ENCODE measurements at regions of chr12 and their contacts with region 1.

Region 1: DNA sequence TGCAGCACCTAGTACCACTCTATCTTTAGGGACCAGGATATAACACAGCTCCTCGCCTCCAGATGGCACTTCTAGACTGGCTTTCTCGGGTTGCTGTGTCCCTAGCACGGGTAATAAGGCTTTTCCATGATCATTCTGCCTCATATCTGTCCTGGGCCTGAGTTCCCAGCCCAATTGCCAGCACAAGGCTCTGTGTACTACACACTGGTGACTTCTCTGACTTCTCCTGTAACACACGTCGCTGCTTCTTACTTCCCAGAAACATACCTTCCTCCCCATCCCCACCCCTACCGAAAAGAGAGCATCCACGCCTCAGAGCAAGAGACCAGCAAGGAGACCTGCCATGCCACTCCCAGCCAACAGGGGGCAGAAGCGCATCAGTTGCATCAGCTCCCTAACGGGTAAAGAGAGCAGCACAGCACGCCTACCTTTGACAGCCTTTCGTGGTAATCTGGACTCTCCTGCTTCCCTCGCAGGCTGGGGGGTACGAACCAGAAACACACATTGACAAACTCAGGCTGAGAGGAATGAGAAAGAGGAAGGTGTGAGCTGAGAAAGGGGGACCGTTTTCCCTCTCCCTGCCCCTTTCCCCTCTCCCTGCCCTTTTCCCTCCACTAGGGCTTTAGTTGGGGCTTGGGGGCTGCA is 21.2 kb upstream of the ZNF740 start:
- DNase-seq: peak; percentile 93
- H3K4me3 Mint-ChIP-seq: no peak overlapping the region
- H3K27ac Mint-ChIP-seq: peak overlapping the region; percentile 21
- H3K4me1 Mint-ChIP-seq: peaks cover 12% of the 10 kb centered on the region
- H3K27me3 Mint-ChIP-seq: no peaks in the 10 kb centered on the region

Region 2: GRCh38 chr12:53098982-53099651 is 60.2 kb before region 1 on chr12:
- CTCF ChIA-PET with region 1: interaction called, 12 read pairs
- POLR2A ChIA-PET with region 1: interaction called, 3 read pairs
- DNase-seq: peak; percentile 90
- H3K4me3 Mint-ChIP-seq: peak overlapping the region; percentile 71
- H3K27ac Mint-ChIP-seq: peak overlapping the region; percentile 69
- H3K4me1 Mint-ChIP-seq: peaks cover 52% of the 10 kb centered on the region
- H3K27me3 Mint-ChIP-seq: peaks cover 15% of the 10 kb centered on the region

Region 3: GRCh38 chr12:53115112-53115890 is 44.0 kb before region 1 on chr12:
- CTCF ChIA-PET with region 1: no interaction called
- POLR2A ChIA-PET with region 1: no interaction called
- DNase-seq: no peak
- H3K4me3 Mint-ChIP-seq: no peak overlapping the region
- H3K27ac Mint-ChIP-seq: no peak overlapping the region
- H3K4me1 Mint-ChIP-seq: no peaks in the 10 kb centered on the region
- H3K27me3 Mint-ChIP-seq: no peaks in the 10 kb centered on the region

Region 4: DNA sequence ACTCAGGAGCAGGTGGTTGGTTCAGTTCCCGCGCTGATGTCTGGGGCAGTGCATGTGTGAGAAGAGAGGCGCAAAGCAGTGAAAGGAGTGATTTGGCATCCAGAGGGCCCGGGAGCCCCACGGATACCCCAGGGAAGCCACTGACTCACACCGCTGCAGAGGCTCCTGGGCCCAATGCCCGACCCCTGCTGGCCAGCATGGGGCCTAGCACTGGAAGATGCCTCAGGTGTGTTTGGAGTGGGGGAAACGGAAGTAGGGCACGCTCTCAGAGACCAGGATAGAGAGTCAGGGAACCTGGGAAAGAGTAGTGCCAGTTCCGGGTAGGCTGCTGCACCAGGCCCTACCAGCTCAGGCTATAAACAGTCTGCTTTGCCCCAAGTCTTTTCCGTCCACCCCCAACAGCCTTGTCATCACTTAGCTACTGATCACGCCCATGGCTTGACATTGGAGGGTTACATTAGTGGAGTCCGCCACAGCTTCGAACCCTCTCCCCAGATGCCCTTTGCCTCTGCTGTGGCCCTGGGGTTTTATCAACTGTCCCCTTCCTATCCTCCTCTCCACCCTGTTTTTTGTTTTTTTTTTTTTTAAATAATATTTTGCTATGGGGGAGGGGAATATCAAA is 30.9 kb after region 1 on chr12:
- CTCF ChIA-PET with region 1: interaction called, 17 read pairs
- POLR2A ChIA-PET with region 1: interaction called, 27 read pairs
- DNase-seq: peak; percentile 43
- H3K4me3 Mint-ChIP-seq: no peak overlapping the region
- H3K27ac Mint-ChIP-seq: peak overlapping the region; percentile 50
- H3K4me1 Mint-ChIP-seq: peaks cover 21% of the 10 kb centered on the region
- H3K27me3 Mint-ChIP-seq: no peaks in the 10 kb centered on the region

Region 5: DNA sequence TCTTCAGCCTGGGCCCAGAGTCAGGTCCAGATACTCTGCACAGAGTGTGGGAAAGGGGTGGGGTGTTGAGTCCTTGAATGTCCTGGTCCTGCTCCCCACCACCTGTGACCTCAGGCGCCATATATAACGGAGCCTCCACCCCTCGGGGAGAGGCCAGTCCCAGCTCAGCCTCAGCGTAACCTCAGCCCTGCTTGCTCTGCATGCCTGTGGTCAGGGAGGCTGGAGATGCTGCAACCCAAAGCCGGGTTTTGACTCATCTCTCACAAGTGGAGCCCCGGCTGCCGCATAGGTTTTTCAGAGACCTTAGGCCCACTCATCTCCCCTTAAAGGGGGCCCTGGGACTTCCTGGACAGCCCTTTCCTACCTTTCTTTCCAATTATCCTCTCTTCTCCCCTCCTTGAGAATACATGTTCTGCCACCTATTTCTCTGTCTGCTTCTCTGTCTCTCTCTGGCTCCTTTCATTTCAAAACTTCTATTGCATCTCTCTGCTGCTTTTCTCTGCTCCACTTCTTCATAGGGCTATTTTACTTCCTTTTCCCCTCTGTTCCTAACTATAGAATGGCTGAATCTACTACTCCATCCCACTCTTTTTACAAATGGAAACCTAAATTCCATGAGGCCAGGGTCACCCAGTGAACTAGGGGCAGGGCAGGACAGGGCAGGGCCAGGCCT is 46.6 kb after region 1 on chr12:
- CTCF ChIA-PET with region 1: interaction called, 14 read pairs
- POLR2A ChIA-PET with region 1: interaction called, 6 read pairs
- DNase-seq: peak; percentile 90
- H3K4me3 Mint-ChIP-seq: peak overlapping the region; percentile 78
- H3K27ac Mint-ChIP-seq: peak overlapping the region; percentile 84
- H3K4me1 Mint-ChIP-seq: peaks cover 82% of the 10 kb centered on the region
- H3K27me3 Mint-ChIP-seq: no peaks in the 10 kb centered on the region

Region 6: DNA sequence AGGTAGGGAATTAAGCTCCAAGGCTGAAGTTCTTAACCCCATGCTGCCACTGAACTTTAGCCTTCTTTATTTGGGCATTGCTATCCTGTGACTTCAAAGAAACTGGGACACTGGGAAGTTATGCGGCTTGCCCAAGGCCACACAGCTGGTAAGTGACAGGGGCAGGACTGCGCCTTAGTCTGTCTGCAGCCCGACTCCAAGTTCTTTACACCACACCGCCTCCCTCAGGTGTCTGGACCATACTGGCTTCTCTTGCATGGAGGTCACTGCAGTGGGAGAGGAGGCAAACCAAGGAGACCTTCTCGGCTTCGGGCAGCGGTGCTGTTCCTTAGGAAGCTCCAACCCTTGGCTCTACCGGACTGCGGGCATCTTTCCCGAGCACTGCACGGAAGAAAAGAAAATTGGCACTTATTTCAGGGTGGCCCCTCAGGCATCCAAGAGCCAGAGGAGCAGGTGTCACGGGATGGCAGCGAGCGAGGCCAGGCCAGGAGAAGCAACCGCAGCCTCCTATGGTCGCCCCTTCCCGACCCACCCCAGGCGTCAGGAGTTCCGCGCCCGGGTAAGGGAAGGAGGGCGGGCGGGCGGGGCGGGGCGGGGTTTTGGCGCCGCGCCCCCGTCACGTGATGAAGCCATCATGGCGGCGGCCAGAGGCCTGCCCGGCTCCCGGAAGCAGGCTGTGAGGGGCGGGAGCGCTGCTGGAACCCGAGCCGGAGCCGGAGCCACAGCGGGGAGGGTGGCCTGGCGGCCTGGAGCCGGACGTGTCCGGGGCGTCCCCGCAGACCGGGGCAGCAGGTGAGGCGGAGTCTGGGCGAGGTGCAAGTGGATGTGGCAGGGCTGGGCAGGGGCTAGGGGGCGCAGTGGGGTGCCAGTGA is 92.4 kb after region 1 on chr12:
- CTCF ChIA-PET with region 1: interaction called, 11 read pairs
- POLR2A ChIA-PET with region 1: no interaction called
- DNase-seq: peak; percentile 79
- H3K4me3 Mint-ChIP-seq: peak overlapping the region; percentile 97
- H3K27ac Mint-ChIP-seq: peak overlapping the region; percentile 81
- H3K4me1 Mint-ChIP-seq: peaks cover 52% of the 10 kb centered on the region
- H3K27me3 Mint-ChIP-seq: no peaks in the 10 kb centered on the region

Region 7: GRCh38 chr12:53287741-53288216 is 128.5 kb after region 1 on chr12:
- CTCF ChIA-PET with region 1: interaction called, 18 read pairs
- POLR2A ChIA-PET with region 1: interaction called, 5 read pairs
- DNase-seq: peak; percentile 76
- H3K4me3 Mint-ChIP-seq: no peak overlapping the region
- H3K27ac Mint-ChIP-seq: peak overlapping the region; percentile 45
- H3K4me1 Mint-ChIP-seq: peaks cover 12% of the 10 kb centered on the region
- H3K27me3 Mint-ChIP-seq: no peaks in the 10 kb centered on the region

Region 8: GRCh38 chr12:53344824-53345485 is 185.6 kb after region 1 on chr12:
- CTCF ChIA-PET with region 1: interaction called, 15 read pairs
- POLR2A ChIA-PET with region 1: no interaction called
- DNase-seq: peak; percentile 70
- H3K4me3 Mint-ChIP-seq: peak overlapping the region; percentile 88
- H3K27ac Mint-ChIP-seq: peak overlapping the region; percentile 26
- H3K4me1 Mint-ChIP-seq: peaks cover 18% of the 10 kb centered on the region
- H3K27me3 Mint-ChIP-seq: peaks cover 15% of the 10 kb centered on the region